Esophagus muscularis mucosa (tissue), 4 donors: ENCODE measurements at regions of chr6 and their contacts with region 1.

Region 1: GRCh38 chr6:3281631-3282475 is 23.1 kb downstream of the PSMG4 start:
- DNase-seq: no peak
- H3K4me3 ChIP-seq: peak overlapping the region in 1 of 4 donors; percentile 16
- H3K27ac ChIP-seq: peak overlapping the region; percentile 51 to 68 (median 63)
- H3K4me1 ChIP-seq: peaks cover 21 to 41% (median 32%) of the 10 kb centered on the region in 4 donors
- H3K27me3 ChIP-seq: no peaks in the 10 kb centered on the region
- CTCF ChIP-seq: no peak
- EP300 ChIP-seq: no peak
- POLR2A ChIP-seq: no peak

Region 2: DNA sequence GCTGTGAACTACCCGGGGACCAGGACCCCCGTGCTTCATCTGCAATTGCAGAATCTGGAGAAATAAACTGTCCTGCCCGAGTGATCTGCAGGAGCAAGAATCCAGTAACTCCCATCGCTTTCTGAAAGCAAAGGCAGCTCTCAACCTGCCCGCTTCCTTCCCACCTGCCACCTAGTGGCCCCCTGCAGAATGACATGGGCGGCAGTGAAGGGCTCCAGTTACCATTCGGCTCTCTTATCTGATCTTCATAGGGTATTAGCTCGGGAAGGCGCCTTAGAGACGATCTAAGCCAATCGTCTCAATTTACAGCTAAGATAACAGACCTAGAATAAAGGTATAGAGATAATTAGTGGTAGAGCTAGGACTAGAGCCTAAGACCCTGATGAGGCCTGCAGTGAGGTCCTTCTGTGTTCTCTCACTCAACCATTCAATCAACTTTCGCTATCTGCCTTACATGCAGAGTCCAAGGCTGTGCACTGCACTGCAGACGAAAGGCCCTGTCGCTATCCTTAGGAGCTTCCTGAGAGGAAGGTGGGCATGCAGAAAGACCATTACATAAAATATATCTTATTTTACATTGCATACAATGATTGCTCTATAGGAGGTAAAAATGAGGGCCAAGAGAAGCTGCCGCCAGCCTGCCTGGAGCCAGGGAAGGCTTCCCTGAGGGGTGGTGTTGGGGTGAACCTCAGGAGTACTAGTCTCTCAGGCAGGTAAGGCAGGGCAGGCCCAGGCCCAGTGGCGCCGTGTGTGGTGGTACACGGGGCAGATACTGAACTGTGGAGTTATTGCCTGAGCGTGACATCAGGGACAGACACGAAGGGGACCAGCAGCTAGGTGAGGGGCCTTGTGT is 30.2 kb before region 1 on chr6:
- intact Hi-C with region 1: no loop called
- DNase-seq: peak; percentile 95
- H3K4me3 ChIP-seq: peak overlapping the region in 2 of 4 donors; percentile 21 to 27
- H3K27ac ChIP-seq: no peak overlapping the region
- H3K4me1 ChIP-seq: peaks cover 23 to 50% (median 45%) of the 10 kb centered on the region in 4 donors
- H3K27me3 ChIP-seq: no peaks in the 10 kb centered on the region
- CTCF ChIP-seq: peak in 2 of 3 experiments; percentile 97 to 99
- EP300 ChIP-seq: no peak
- POLR2A ChIP-seq: no peak

Region 3: GRCh38 chr6:3367630-3368029 is 85.8 kb after region 1 on chr6:
- intact Hi-C with region 1: no loop called
- DNase-seq: no peak
- H3K4me3 ChIP-seq: no peak overlapping the region
- H3K27ac ChIP-seq: no peak overlapping the region
- H3K4me1 ChIP-seq: peaks cover 0 to 47% (median 25%) of the 10 kb centered on the region in 4 donors
- H3K27me3 ChIP-seq: no peaks in the 10 kb centered on the region
- CTCF ChIP-seq: no peak
- EP300 ChIP-seq: no peak
- POLR2A ChIP-seq: no peak

Region 4: DNA sequence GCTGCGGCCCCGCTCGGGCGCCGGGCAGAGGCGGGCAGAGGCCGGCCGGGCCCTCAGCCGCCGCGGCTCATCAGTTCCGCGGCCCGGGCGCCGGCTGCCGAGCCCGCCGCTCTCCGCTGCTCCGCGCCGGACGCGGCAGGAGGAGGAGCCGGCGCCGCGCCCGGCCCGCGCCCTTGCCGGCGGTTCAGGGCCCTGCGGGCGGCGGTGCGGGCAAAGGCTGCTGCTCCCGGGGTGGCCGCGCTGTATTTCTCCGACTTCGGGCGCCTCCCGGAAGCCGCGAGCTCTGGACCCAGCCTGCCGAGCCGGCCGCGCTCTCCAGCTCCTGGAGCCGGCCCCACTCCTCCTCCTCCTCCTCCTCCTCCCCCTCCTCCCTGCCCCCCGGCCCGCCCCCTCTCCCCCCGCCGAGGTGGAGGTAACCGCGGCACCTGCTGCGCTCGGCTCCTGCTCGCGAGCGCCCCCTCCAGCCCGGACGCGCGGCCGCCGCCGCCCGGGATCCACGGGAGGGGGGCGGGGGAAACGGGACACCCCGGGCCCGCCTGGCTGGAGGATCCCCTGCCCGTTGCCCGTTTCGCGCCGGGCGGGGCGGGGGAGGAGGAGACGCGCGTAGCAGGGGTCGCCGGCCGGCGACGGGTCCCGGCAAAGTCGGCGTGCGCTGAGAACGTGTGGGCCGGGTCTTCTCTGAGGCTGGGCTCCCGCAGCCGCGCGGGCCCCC is 175.1 kb after region 1 on chr6 and contains the start of gene SLC22A23:
- intact Hi-C with region 1: loop called (anchors 2 kb)
- DNase-seq: no peak
- H3K4me3 ChIP-seq: peak within 1 kb of the TSS; percentile 64 to 75 (median 74)
- H3K27ac ChIP-seq: peak within 1 kb of the TSS; percentile 83 to 87 (median 84)
- H3K4me1 ChIP-seq: peaks cover 28 to 42% (median 40%) of the 10 kb centered on the region in 4 donors
- H3K27me3 ChIP-seq: no peaks in the 10 kb centered on the region
- CTCF ChIP-seq: peak; percentile 63 to 92 (median 79)
- EP300 ChIP-seq: no peak
- POLR2A ChIP-seq: no peak
- total RNA-seq, gene SLC22A23: 7.6 to 13.1 (median 9.5) TPM

Region 5: GRCh38 chr6:3732345-3733141 is 450.7 kb after region 1 on chr6:
- intact Hi-C with region 1: loop called (anchors 2 kb)
- DNase-seq: no peak
- H3K4me3 ChIP-seq: no peak overlapping the region
- H3K27ac ChIP-seq: peak overlapping the region in 2 of 4 donors; percentile 16 to 34
- H3K4me1 ChIP-seq: peaks cover 8 to 42% (median 37%) of the 10 kb centered on the region in 4 donors
- H3K27me3 ChIP-seq: no peaks in the 10 kb centered on the region
- CTCF ChIP-seq: peak; percentile 83 to 86 (median 86)
- EP300 ChIP-seq: no peak
- POLR2A ChIP-seq: no peak

Region 6: DNA sequence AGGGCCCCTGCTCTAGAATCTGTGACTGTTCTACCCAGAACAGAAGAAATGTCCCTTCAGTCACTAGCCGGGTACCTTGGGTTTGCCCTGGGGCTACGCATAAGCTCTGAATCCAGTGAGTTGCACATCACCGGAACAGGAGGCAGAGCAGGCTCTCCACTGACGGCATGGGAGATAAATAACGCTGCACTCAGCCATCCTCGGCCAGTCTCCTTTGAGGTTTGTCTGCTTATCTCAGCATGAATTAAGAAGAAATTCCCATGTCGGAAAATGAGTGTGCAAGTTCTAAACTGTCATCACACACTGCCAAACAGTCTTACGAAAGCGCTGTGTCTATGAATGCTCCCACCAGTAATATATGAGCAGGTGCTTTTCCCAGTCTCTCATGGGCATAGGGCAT is 658.1 kb after region 1 on chr6:
- intact Hi-C with region 1: loop called (anchors 10 kb)
- DNase-seq: peak; percentile 80
- H3K4me3 ChIP-seq: no peak overlapping the region
- H3K27ac ChIP-seq: no peak overlapping the region
- H3K4me1 ChIP-seq: no peaks in the 10 kb centered on the region
- H3K27me3 ChIP-seq: peaks cover 0 to 4% (median 0%) of the 10 kb centered on the region in 4 donors
- CTCF ChIP-seq: no peak
- EP300 ChIP-seq: no peak
- POLR2A ChIP-seq: no peak